Psoas muscle (tissue), 8 donors: ENCODE measurements at regions of chr17 and their contacts with region 1.

Region 1: DNA sequence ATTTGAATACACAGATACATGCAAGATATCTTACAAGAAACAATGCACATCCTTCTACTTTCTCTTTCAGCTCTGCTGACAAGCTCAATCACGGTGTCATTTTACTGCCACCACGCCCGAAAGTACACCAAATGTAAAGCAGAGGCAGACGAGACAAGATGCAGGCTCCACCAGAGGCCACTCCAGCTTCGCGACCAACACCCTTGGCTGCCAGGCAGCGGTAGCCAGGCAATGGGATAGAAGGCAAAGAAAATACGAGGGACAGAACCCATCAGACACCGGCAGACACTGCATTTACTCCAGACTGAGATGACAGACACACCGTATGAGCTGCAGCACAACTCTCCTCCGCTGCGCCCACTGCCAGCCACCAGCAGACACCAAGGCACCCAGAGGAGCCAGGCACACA is 41.0 kb downstream of the USP22 start:
- DNase-seq: peak; percentile 4 to 51
- ATAC-seq: no peak
- H3K4me3 ChIP-seq: no peak overlapping the region
- H3K27ac ChIP-seq: peak overlapping the region; percentile 33
- H3K4me1 ChIP-seq: peaks cover 25% of the 10 kb centered on the region
- H3K27me3 ChIP-seq: no peaks in the 10 kb centered on the region
- CTCF ChIP-seq: no peak

Region 2: DNA sequence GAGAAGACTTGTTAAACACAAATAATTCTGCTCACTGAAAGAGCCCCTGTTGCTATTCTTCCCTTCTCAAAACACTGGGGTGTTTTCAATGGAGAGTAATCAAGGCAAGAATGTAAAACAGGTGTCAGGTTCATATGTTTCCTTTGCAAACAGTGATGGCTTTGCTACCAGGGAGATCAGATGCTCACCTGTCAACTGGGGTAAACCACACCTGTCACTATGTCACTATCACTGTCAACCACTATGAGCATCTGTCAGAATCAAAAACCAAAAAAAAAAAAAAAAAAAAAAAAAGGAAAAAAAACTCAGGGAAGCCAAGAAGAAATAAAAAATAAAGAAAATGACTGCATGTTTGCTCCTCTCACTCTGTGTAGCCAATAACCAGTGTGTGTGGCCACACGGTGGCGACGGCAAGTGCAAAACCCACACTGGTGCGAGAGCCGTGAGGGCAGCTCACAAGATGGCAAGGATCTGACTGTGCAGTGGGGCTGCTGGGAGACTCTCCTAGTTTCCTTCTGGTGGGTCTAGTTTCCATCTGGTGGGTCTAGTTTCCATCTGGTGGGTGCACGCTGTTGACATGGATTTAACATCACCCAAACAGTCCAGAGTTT is 18.3 kb after region 1 on chr17:
- intact Hi-C with region 1: loop called in 1 of 2 experiments (anchors 2 kb)
- DNase-seq: peak; percentile 55 to 80
- ATAC-seq: peak; percentile 66 to 81 (median 72)
- H3K4me3 ChIP-seq: no peak overlapping the region
- H3K27ac ChIP-seq: peak overlapping the region; percentile 67
- H3K4me1 ChIP-seq: peaks cover 50% of the 10 kb centered on the region
- H3K27me3 ChIP-seq: no peaks in the 10 kb centered on the region
- CTCF ChIP-seq: peak; percentile 48

Region 3: DNA sequence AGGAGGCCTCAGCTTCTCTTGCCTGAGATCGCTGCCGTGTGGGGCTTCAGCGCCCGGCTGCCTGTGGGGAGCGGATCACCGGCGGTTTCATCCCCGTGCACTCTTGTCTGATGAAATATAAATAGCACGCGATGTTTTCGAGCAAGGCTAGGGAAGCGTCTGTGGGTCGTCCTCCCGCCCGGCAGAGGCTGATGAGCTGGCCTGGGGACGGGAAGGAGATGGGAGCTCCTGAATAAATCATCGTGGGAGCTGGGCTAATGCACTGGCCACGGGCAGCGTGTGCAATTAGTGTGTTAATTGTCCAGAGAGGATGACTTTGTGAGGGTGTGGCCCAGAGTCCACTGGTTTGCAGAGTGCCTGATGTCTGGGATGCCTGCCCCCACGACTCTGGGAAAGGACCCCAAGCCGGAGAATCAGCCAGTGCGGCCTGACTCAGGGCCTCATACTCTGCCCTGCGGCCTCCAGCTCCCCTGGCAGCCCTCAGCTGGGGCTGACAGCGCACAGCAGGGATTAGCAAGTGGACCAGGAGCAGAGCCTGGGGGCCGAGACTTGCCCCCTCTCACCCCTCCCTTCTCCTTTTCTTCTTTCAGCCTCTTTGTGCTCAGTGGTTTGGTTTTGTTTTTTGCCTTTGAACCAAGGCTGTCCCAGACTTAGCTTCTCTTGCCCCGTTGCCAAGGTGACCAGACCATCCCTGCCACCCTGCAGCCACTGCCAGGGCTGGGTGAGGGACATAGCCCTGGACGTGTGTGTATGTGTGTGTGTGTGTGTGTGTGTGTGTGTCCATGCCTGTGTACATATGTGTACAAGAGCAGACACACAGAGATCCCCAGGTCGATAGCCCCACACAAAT is 395.7 kb after region 1 on chr17:
- intact Hi-C with region 1: loop called in 1 of 2 experiments (anchors 10 kb)
- DNase-seq: peak in 1 of 2 donors; percentile 43
- ATAC-seq: peak in 3 of 4 donors; percentile 21 to 54 (median 34)
- H3K4me3 ChIP-seq: no peak overlapping the region
- H3K27ac ChIP-seq: peak overlapping the region; percentile 41
- H3K4me1 ChIP-seq: peaks cover 11% of the 10 kb centered on the region
- H3K27me3 ChIP-seq: no peaks in the 10 kb centered on the region
- CTCF ChIP-seq: no peak